HepG2 (cell line): ENCODE measurements at regions of chr15 and their contacts with region 1.

Region 1: GRCh38 chr15:42065033-42065432 is 29.3 kb downstream of the PLA2G4D start:
- DNase-seq: peak; percentile 64
- ATAC-seq: peak; percentile 78
- H3K4me3 ChIP-seq: peak overlapping the region; percentile 37 to 65 (median 42); a peak in 5 of 6 replicates
- H3K27ac ChIP-seq: peak overlapping the region; percentile 59
- H3K4me1 ChIP-seq: peaks cover 75% of the 10 kb centered on the region
- H3K27me3 ChIP-seq: peaks cover 2% of the 10 kb centered on the region in 2 experiments; a peak in 2 of 5 replicates
- CTCF ChIP-seq: no peak
- EP300 ChIP-seq: no peak
- POLR2A ChIP-seq: no peak
- RAD21 ChIP-seq: no peak

Region 2: GRCh38 chr15:41989259-41989933 is 75.6 kb before region 1 on chr15:
- CTCF ChIA-PET with region 1: interaction called, 39 read pairs
- POLR2A ChIA-PET with region 1: no interaction called
- in situ Hi-C with region 1: no loop called
- intact Hi-C with region 1: loop called (anchors 2 kb)
- DNase-seq: peak; percentile 56
- ATAC-seq: peak; percentile 95
- H3K4me3 ChIP-seq: peak overlapping the region in 1 of 3 experiments; percentile 38; a peak in 2 of 6 replicates
- H3K27ac ChIP-seq: no peak overlapping the region
- H3K4me1 ChIP-seq: peaks cover 11% of the 10 kb centered on the region
- H3K27me3 ChIP-seq: peaks cover 7 to 60% of the 10 kb centered on the region in 2 experiments
- CTCF ChIP-seq: peak; percentile 99
- EP300 ChIP-seq: no peak
- POLR2A ChIP-seq: no peak
- RAD21 ChIP-seq: peak; percentile 96

Region 3: DNA sequence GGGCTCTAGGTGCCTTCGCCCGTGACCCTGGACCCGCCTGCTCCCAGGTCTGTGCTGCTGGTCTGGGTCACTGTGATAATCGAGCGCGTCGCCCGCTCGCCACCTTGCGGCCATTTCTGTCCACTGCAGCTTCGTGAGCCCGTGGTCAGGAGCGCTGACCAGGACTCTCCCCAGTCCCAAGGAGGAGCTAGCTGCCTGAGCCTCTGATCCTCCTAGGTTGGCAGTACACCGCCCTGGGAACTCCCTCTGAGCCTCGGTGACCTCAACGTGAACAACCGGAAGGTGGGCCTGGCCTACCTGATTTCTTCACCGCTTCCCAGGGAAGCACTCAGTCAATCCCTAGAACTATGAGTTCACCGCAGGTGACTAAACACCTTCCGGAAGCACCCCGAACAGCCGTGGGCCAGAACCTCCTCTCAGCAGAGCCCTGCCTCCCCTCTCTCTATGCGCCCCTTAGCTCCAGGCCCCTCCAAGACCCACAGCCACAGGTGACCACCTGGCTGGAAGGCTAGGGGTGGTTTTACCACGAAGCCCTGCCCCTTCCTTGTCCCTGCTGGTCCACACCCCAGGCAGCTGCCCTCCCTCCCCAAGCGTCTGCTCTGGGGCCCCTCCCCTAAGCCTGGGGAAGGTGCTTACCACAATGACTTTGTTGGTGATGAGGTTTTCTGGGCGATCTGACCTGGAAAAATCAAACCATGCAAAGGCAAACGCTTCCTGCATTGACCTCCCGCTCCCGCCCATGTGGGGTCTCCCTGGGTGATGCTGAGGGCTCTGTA is 19.6 kb after region 1 on chr15:
- CTCF ChIA-PET with region 1: interaction called, 16 read pairs
- POLR2A ChIA-PET with region 1: no interaction called
- in situ Hi-C with region 1: no loop called
- intact Hi-C with region 1: loop called (anchors 1 kb)
- DNase-seq: peak; percentile 46
- ATAC-seq: peak; percentile 89
- H3K4me3 ChIP-seq: peak overlapping the region; percentile 11 to 65 (median 32); a peak in 5 of 6 replicates
- H3K27ac ChIP-seq: no peak overlapping the region
- H3K4me1 ChIP-seq: peaks cover 24% of the 10 kb centered on the region
- H3K27me3 ChIP-seq: peaks cover 12 to 71% of the 10 kb centered on the region in 2 experiments
- CTCF ChIP-seq: peak; percentile 98
- EP300 ChIP-seq: no peak
- POLR2A ChIP-seq: no peak
- RAD21 ChIP-seq: peak; percentile 91

Region 4: DNA sequence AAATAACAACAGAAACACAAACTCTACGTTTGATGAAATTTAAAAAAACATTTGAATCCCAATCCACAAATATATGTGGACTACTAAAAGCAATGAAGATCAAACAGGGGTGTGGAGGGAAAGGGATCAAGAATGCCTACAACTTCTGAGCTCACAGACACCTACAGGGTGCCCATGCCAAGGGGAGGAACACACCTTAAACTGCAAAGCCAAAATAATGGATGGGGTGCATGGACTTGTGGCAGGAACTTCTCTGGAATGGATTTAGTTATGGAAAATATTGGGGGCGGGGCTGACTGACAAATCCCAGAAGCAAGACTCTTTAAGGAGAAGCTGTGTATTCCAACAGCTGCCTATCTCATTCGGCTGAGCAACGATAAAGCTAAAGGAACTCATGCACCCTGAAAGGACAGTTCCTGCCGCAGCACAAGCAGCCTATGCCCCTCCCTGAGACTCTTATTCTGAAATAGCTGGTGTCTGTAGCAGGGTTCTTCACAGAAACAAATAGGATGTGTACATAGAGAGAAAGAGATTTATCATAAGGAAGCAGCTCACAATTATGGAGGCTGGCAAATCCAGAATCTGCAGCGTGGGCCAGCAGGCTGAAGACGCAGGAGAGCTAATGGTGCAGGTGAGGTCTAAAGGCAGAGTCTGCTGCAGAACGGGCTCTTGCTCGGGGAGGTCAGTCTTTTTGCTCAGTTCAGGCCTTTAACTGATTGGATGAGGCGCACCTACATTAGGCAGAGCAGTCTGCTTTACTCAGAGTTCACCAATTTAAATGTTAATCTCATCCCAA is 53.8 kb after region 1 on chr15:
- CTCF ChIA-PET with region 1: no interaction called
- POLR2A ChIA-PET with region 1: no interaction called
- in situ Hi-C with region 1: no loop called
- intact Hi-C with region 1: no loop called
- DNase-seq: no peak
- ATAC-seq: no peak; the same call in 1 of the 3 replicates
- H3K4me3 ChIP-seq: no peak overlapping the region
- H3K27ac ChIP-seq: no peak overlapping the region
- H3K4me1 ChIP-seq: peaks cover 13% of the 10 kb centered on the region
- H3K27me3 ChIP-seq: peaks cover 2 to 12% of the 10 kb centered on the region in 2 experiments; a peak in 3 of 5 replicates
- CTCF ChIP-seq: no peak
- EP300 ChIP-seq: no peak
- POLR2A ChIP-seq: no peak
- RAD21 ChIP-seq: no peak

Region 5: GRCh38 chr15:42137431-42138261 is 72.6 kb after region 1 on chr15:
- CTCF ChIA-PET with region 1: interaction called, 6 read pairs
- POLR2A ChIA-PET with region 1: no interaction called
- in situ Hi-C with region 1: loop called (anchors 5 kb)
- intact Hi-C with region 1: loop called (anchors 5 kb)
- DNase-seq: peak; percentile 48
- ATAC-seq: no peak
- H3K4me3 ChIP-seq: no peak overlapping the region
- H3K27ac ChIP-seq: no peak overlapping the region
- H3K4me1 ChIP-seq: peaks cover 81% of the 10 kb centered on the region
- H3K27me3 ChIP-seq: no peaks in the 10 kb centered on the region
- CTCF ChIP-seq: peak; percentile 53
- EP300 ChIP-seq: no peak
- POLR2A ChIP-seq: no peak
- RAD21 ChIP-seq: no peak

Region 6: GRCh38 chr15:42385206-42385979 is 320.4 kb after region 1 on chr15:
- CTCF ChIA-PET with region 1: no interaction called
- POLR2A ChIA-PET with region 1: no interaction called
- in situ Hi-C with region 1: no loop called
- intact Hi-C with region 1: loop called (anchors 1 kb)
- DNase-seq: peak; percentile 45
- ATAC-seq: peak; percentile 92
- H3K4me3 ChIP-seq: no peak overlapping the region
- H3K27ac ChIP-seq: no peak overlapping the region
- H3K4me1 ChIP-seq: peaks cover 21% of the 10 kb centered on the region
- H3K27me3 ChIP-seq: no peaks in the 10 kb centered on the region
- CTCF ChIP-seq: peak; percentile 86
- EP300 ChIP-seq: no peak
- POLR2A ChIP-seq: no peak
- RAD21 ChIP-seq: peak; percentile 81

Region 7: DNA sequence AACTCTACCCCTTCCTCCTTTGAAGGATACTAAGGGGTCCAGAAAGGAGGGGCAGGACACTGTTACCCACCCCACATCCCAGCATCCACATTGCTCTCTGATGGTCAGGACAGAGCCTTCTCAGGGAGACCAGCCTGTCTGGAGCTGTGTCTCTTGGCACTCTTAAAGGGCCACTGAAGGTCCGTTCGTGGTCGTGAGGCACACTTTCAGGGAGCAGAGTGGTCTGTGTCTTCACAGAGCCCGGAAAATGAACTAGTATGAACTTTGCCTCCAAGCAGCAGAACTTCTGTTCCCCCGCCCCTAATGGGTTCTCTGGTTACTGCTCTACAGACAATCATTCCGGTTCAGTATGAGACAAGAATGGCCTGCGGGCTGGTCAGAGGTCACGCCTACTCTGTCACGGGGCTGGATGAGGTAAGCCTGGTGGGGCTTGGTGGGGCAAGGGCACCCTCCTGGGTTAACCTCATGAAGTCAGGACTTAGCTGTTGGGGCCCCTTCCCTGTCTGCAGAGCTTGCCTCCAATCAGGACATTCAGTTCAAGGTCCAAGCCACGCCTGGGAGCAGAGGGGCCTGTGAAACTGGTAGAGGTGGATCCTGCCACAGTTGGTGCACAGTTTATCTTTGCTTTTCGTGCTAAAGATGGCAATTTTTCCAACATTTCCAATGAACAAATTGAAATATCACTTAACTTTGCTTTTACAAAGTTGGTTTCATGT is 327.4 kb after region 1 on chr15:
- CTCF ChIA-PET with region 1: no interaction called
- POLR2A ChIA-PET with region 1: no interaction called
- in situ Hi-C with region 1: no loop called
- intact Hi-C with region 1: loop called (anchors 1 kb)
- DNase-seq: peak; percentile 98
- ATAC-seq: peak; percentile 99
- H3K4me3 ChIP-seq: peak overlapping the region; percentile 48 to 74 (median 50); a peak in 5 of 6 replicates
- H3K27ac ChIP-seq: peak overlapping the region; percentile 100
- H3K4me1 ChIP-seq: peaks cover 59% of the 10 kb centered on the region
- H3K27me3 ChIP-seq: no peaks in the 10 kb centered on the region
- CTCF ChIP-seq: peak; percentile 38; the same call in 1 of the 2 replicates
- EP300 ChIP-seq: peak; percentile 62 to 72; a peak in 2 of 4 replicates
- POLR2A ChIP-seq: peak; percentile 80 to 95
- RAD21 ChIP-seq: peak; percentile 32; the same call in 1 of the 2 replicates

Region 8: GRCh38 chr15:42474827-42475226 is 409.8 kb after region 1 on chr15:
- CTCF ChIA-PET with region 1: no interaction called
- POLR2A ChIA-PET with region 1: no interaction called
- in situ Hi-C with region 1: no loop called
- intact Hi-C with region 1: loop called (anchors 2 kb)
- DNase-seq: no peak
- ATAC-seq: no peak
- H3K4me3 ChIP-seq: no peak overlapping the region
- H3K27ac ChIP-seq: no peak overlapping the region
- H3K4me1 ChIP-seq: no peaks in the 10 kb centered on the region
- H3K27me3 ChIP-seq: no peaks in the 10 kb centered on the region
- CTCF ChIP-seq: no peak
- EP300 ChIP-seq: no peak
- POLR2A ChIP-seq: no peak
- RAD21 ChIP-seq: no peak